Gastrocnemius medialis (tissue), 4 donors: ENCODE measurements at regions of chr3 and their contacts with region 1.

Region 1: DNA sequence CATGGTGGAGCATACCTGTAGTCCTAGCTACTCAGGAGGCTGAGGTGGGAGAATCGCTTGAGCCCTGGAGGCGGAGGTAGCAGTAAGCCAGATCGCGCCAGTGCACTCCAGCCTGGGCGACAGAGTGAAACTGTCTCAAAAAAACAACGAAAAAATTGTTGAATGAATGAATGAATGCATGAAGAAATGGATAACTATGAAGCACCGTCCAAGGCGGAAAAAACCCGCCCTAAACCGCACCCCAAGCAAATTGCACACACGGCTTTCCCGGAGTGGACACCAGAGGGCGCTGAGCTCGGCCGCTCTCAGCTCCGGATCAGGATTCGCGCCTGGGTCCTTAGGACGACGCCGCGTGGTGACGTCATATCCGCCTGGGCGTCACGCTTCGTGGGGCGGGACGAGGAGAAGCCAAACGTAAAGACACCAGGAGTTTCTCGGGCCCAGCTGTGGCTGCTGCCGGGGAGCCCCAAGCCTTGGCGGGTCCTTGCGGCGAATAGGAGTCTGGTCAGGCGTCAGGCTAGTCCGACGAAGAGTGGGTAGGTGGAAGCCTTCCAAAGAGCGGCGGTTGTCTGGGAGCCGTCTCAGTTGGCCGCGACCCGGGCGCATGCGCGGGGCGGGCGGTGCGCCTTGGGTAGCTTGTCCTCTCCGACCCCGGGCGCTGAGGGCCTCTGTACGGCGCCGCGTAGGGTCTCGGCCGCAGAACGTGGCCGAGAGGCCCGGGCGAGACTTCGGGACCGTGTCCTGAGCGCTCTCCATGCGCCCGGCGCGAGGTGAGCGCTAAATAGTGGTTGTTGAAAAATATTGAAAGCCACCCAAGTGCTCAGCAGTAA is at the starts of genes HTD2 and RPP14:
- DNase-seq: peak; percentile 96 to 98
- ATAC-seq: peak; percentile 87 to 90
- H3K4me3 ChIP-seq: peak within 1 kb of the TSS; percentile 60 to 88 (median 80)
- H3K27ac ChIP-seq: peak within 1 kb of the TSS; percentile 89 to 99 (median 95)
- H3K4me1 ChIP-seq: peaks cover 30 to 35% of the 10 kb centered on the region in 2 donors
- H3K27me3 ChIP-seq: peaks cover 0 to 2% (median 0%) of the 10 kb centered on the region in 3 donors
- CTCF ChIP-seq: peak; percentile 92 to 97 (median 95)
- POLR2A ChIP-seq: peak; percentile 80 to 86
- total RNA-seq, gene HTD2: 14.1 to 26.2 (median 21.7) TPM
- total RNA-seq, gene RPP14: 16.6 to 28.9 (median 17.1) TPM

Region 2: GRCh38 chr3:58021072-58021959 is 284.8 kb before region 1 on chr3:
- in situ Hi-C with region 1: no loop called
- intact Hi-C with region 1: no loop called
- DNase-seq: no peak
- ATAC-seq: peak in 1 of 2 donors; percentile 39
- H3K4me3 ChIP-seq: no peak overlapping the region
- H3K27ac ChIP-seq: peak overlapping the region; percentile 33 to 72 (median 68)
- H3K4me1 ChIP-seq: peaks cover 0 to 3% of the 10 kb centered on the region in 2 donors
- H3K27me3 ChIP-seq: no peaks in the 10 kb centered on the region
- CTCF ChIP-seq: no peak
- POLR2A ChIP-seq: no peak

Region 3: GRCh38 chr3:58177747-58178527 is 128.2 kb before region 1 on chr3:
- in situ Hi-C with region 1: loop called in 1 of 4 experiments (anchors 10 kb)
- intact Hi-C with region 1: loop called (anchors 5 kb)
- DNase-seq: peak; percentile 68 to 73
- ATAC-seq: peak; percentile 88 to 93
- H3K4me3 ChIP-seq: peak overlapping the region; percentile 54 to 62 (median 58)
- H3K27ac ChIP-seq: no peak overlapping the region
- H3K4me1 ChIP-seq: peaks cover 3 to 15% of the 10 kb centered on the region in 2 donors
- H3K27me3 ChIP-seq: no peaks in the 10 kb centered on the region
- CTCF ChIP-seq: peak; percentile 87 to 93 (median 88)
- POLR2A ChIP-seq: no peak

Region 4: GRCh38 chr3:58237238-58237940 is 68.7 kb before region 1 on chr3 and contains the start of gene ABHD6:
- in situ Hi-C with region 1: loop called in 1 of 4 experiments (anchors 10 kb)
- intact Hi-C with region 1: loop called (anchors 1 kb)
- DNase-seq: peak; percentile 49 to 51
- ATAC-seq: peak; percentile 91 to 94
- H3K4me3 ChIP-seq: peak within 1 kb of the TSS; percentile 68 to 96 (median 76)
- H3K27ac ChIP-seq: peak within 1 kb of the TSS; percentile 76 to 87 (median 86)
- H3K4me1 ChIP-seq: peaks cover 9 to 14% of the 10 kb centered on the region in 2 donors
- H3K27me3 ChIP-seq: no peaks in the 10 kb centered on the region
- CTCF ChIP-seq: peak in 4 of 5 experiments; percentile 18 to 47 (median 40)
- POLR2A ChIP-seq: peak; percentile 31 to 37
- total RNA-seq, gene ABHD6: 5.8 to 14.0 (median 9.6) TPM

Region 5: GRCh38 chr3:58414538-58415197 is 108.6 kb after region 1 on chr3:
- in situ Hi-C with region 1: no loop called
- intact Hi-C with region 1: loop called (anchors 5 kb)
- DNase-seq: peak in 1 of 2 donors; percentile 29
- ATAC-seq: peak; percentile 63 to 71
- H3K4me3 ChIP-seq: no peak overlapping the region
- H3K27ac ChIP-seq: no peak overlapping the region
- H3K4me1 ChIP-seq: no peaks in the 10 kb centered on the region
- H3K27me3 ChIP-seq: no peaks in the 10 kb centered on the region
- CTCF ChIP-seq: peak; percentile 73 to 82 (median 82)
- POLR2A ChIP-seq: no peak

Region 6: GRCh38 chr3:58491506-58492402 is 185.7 kb after region 1 on chr3 and contains the start of gene KCTD6:
- in situ Hi-C with region 1: loop called in 1 of 4 experiments (anchors 10 kb)
- intact Hi-C with region 1: loop called (anchors 1 kb)
- DNase-seq: peak; percentile 86 to 89
- ATAC-seq: peak; percentile 88 to 90
- H3K4me3 ChIP-seq: peak within 1 kb of the TSS; percentile 72 to 90 (median 80)
- H3K27ac ChIP-seq: peak within 1 kb of the TSS; percentile 82 to 91 (median 85)
- H3K4me1 ChIP-seq: peaks cover 48 to 49% of the 10 kb centered on the region in 2 donors
- H3K27me3 ChIP-seq: no peaks in the 10 kb centered on the region
- CTCF ChIP-seq: peak; percentile 60 to 82 (median 78)
- POLR2A ChIP-seq: peak; percentile 52 to 73
- total RNA-seq, gene KCTD6: 4.3 to 8.3 (median 5.8) TPM